ENCODE measurements at regions of chr6 and their contacts with region 1.

Region 1: DNA sequence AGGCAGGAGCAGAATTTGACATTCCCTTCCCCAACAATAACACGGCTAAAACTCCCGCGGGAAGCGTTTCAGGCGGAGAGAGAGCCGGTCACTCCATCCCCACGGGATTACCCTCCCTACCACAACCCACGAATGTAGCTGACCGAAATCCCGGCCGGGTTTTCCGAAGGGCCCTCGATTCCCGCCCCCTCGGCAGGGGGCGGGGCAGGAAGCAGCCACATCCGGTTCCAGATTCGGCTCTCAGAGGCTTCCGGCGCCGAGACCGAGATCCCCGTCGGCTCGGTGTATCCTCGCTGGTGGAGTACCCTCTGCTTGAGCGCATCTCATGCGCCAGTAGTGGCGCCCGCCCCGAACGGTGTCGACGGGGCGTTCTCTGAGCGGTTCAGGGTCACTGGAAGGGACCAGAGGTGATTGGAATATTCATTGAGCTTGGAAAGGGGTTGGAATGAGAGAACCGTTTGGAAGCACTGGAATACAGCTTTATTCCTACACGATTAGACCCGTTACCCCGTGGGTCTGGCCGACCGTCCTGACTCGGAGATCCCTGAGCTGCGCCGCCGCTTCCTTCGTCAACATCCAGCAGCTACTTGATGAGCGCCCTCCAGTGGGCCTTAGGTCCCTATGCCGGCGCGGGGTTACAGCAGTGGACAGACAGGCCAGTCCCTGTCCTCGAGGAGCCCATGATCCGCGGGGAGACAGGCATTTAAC is 649 bp upstream of the RGL2 start:
- DNase-seq: peak; percentile 85 to 88 (median 87)
- H3K4me3 ChIP-seq: peak overlapping the region; percentile 75 to 95 (median 83)
- H3K4me3 Mint-ChIP-seq: peak overlapping the region; percentile 100
- H3K27ac ChIP-seq: peak overlapping the region; percentile 94 to 98
- H3K27ac Mint-ChIP-seq: peak overlapping the region; percentile 98 to 100 (median 100)
- H3K4me1 ChIP-seq: peaks cover 34 to 36% of the 10 kb centered on the region in 2 donors
- H3K4me1 Mint-ChIP-seq: peaks cover 46% of the 10 kb centered on the region
- H3K27me3 ChIP-seq: no peaks in the 10 kb centered on the region
- H3K27me3 Mint-ChIP-seq: peaks cover 0 to 3% (median 0%) of the 10 kb centered on the region in 3 donors
- CTCF ChIP-seq: peak; percentile 87

Region 2: DNA sequence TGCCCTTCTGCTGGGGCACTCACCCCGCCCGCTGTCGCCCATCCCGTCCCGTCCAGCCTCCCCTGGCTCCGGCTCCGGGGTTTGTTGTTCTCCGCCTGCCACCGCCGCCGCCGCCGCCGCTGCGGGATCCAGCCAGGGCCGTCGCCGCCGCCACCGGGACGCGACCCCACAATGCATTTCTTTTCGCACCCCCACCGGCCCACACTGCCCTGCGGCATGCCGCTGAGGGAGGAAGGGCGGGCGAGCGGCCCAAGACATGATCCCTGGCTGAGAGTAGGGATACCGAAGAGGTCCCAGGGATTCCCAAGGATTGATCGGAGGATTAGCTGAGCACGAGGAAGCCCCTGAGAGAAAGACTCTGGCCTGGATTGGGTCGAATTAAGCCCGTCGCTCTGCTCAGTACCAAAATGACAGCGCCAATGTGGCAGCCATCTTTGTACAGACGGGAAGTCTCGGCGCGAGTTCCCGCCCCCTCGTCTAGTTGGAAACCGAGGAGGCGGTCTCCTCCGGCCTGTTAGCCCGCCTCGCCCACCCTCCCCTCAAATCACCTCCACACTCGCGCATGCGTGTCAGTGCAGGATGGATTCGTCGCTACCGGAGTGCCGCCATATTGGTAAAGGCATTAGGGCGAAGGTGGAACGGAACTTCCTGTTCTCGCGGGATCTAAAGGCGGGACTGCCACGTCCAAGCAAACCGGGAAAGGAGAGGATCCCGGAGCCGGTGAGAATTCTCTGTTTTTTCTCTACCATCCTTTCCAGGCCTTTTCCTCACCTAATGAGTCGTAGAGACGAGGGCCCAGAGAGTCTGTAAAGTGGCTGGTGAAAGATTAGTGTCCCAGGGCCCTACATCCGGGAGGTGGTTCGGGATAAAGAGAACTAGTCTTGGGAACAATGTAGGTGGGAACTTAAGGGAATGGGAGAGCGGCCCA is 98.9 kb before region 1 on chr6 and contains the starts of genes RXRB and SLC39A7:
- intact Hi-C with region 1: loop called (anchors 2 to 5 kb)
- DNase-seq: peak; percentile 99
- H3K4me3 ChIP-seq: peak within 1 kb of the TSS; percentile 83 to 96 (median 95)
- H3K4me3 Mint-ChIP-seq: peak within 1 kb of the TSS; percentile 94 to 96
- H3K27ac ChIP-seq: peak within 1 kb of the TSS; percentile 94
- H3K27ac Mint-ChIP-seq: peak within 1 kb of the TSS; percentile 95 to 99 (median 97)
- H3K4me1 ChIP-seq: peaks cover 40 to 53% of the 10 kb centered on the region in 2 donors
- H3K4me1 Mint-ChIP-seq: peaks cover 60% of the 10 kb centered on the region
- H3K27me3 ChIP-seq: no peaks in the 10 kb centered on the region
- H3K27me3 Mint-ChIP-seq: peaks cover 0 to 5% (median 0%) of the 10 kb centered on the region in 3 donors
- CTCF ChIP-seq: no peak
- polyA plus RNA-seq, gene RXRB: 4.5 to 74.5 (median 5.1) TPM
- polyA plus RNA-seq, gene SLC39A7: 14.5 to 32.7 (median 17.7) TPM

Region 3: GRCh38 chr6:33317669-33318425 is 18.5 kb after region 1 on chr6 and contains the start of gene ZBTB22:
- intact Hi-C with region 1: loop called in 1 of 2 experiments (anchors 1 kb)
- DNase-seq: peak; percentile 95 to 97 (median 95)
- H3K4me3 ChIP-seq: peak within 1 kb of the TSS; percentile 50 to 99 (median 89)
- H3K4me3 Mint-ChIP-seq: peak within 1 kb of the TSS; percentile 98
- H3K27ac ChIP-seq: peak within 1 kb of the TSS; percentile 77
- H3K27ac Mint-ChIP-seq: peak within 1 kb of the TSS; percentile 97 to 100 (median 98)
- H3K4me1 ChIP-seq: peaks cover 62 to 74% of the 10 kb centered on the region in 2 donors
- H3K4me1 Mint-ChIP-seq: peaks cover 71% of the 10 kb centered on the region
- H3K27me3 ChIP-seq: no peaks in the 10 kb centered on the region
- H3K27me3 Mint-ChIP-seq: peaks cover 0 to 2% (median 1%) of the 10 kb centered on the region in 3 donors
- CTCF ChIP-seq: no peak
- polyA plus RNA-seq, gene ZBTB22: 12.2 to 16.5 (median 16.1) TPM

Region 4: DNA sequence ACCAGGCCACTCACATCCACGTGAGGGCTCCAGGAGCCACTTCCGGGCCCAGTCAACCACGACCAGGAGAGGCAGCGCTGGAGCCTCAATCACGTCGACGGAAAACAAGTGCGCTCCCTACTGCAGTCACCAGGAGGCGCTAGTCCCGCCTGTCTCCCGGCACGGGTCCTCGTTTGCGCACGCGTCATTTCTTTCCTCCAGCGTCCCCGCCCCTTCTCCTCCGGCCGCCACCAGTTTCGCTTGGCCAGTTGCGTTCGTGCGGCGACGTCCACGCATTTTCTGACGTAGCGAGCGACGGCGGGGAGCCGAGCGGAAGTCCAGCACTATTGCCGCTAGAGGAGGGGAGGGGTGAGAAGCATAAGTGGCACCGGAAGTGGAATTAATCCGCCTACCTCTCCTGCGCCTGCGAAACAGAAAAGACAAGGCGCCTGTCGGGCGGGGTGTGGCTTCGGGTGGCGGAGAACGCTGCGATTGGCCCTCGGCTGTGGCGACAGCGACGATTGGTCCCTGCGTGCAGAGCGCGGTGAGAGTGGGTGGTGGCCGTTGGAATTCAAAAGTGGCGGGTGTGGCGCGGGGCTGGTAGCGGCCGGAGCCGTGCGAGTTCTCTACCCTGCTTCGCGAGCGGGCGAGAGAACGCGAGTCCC is 92.0 kb after region 1 on chr6 and contains the start of gene KIFC1:
- intact Hi-C with region 1: loop called in 1 of 2 experiments (anchors 10 kb)
- DNase-seq: peak; percentile 99 to 100 (median 100)
- H3K4me3 ChIP-seq: peak within 1 kb of the TSS; percentile 71 to 89 (median 74)
- H3K4me3 Mint-ChIP-seq: peak within 1 kb of the TSS; percentile 80 to 87
- H3K27ac ChIP-seq: peak within 1 kb of the TSS; percentile 72 to 78
- H3K27ac Mint-ChIP-seq: peak within 1 kb of the TSS; percentile 85 to 95 (median 94)
- H3K4me1 ChIP-seq: peaks cover 26 to 31% of the 10 kb centered on the region in 2 donors
- H3K4me1 Mint-ChIP-seq: peaks cover 39% of the 10 kb centered on the region
- H3K27me3 ChIP-seq: no peaks in the 10 kb centered on the region
- H3K27me3 Mint-ChIP-seq: peaks cover 0 to 1% (median 0%) of the 10 kb centered on the region in 3 donors
- CTCF ChIP-seq: peak; percentile 94
- polyA plus RNA-seq, gene KIFC1: 0.14 to 0.87 (median 0.68) TPM

Measured in CD14-positive monocyte (primary cell).